Activated T-helper 2 cell treated with anti-CD3 and anti-CD28 coated beads, Interferon-gamma antibody, Interleukin-2, Interleukin-4, amounts not matched to agents 10 μg/mL and 5 μg/mL and 100 μg/mL, durations not matched to agents 14 hours and 24 hours and 36 hours (primary cell): ENCODE measurements at regions of chr6 and their contacts with region 1.

Region 1: DNA sequence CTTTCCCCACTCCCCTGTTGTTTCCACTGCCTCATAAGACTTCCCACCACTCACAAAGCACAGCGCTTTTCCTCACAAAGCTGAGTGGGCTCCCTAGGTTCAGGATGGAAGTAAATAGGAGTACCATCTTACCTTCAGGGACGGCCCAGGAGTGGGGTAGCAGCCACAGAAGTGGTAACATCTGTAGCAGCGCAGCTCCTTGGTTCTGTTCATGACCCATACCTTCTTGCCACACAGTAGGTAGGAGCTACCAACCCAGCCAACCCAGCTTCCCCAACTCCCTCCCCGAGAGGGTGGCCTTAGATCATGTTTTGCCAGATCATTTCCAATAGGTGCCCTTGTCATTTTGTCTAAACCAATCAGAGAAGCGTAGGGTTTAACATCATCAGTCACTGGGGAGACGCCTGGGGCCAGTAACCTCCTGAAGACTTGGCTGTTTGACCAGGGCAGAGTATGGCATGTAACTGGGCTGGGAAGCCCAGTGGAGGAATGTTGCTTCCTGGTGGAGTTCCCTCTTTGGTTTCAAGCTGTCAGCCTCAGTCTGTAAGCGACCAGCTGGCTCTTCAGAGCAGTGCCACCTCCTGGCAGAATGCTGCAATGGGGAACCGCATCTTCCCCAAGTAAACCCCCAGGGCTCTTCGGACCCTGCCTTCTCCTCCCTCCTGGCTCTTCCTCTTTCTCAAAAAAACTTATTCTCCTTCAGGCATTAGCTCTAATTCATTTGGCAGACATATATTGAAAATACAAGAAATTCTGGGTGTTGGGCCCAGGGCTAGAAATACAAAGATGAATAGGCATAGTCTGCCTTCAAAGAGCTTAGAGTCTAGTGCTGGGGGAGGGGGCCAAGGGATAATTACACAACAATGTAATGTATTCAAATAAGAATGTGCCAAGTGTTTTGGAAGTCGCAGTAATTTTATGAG is at the start of gene HLA-DMA:
- DNase-seq: peak; percentile 76
- H3K4me3 Mint-ChIP-seq: peak within 1 kb of the TSS; percentile 80
- H3K27ac Mint-ChIP-seq: peak within 1 kb of the TSS; percentile 79
- H3K4me1 Mint-ChIP-seq: peaks cover 45% of the 10 kb centered on the region
- H3K27me3 Mint-ChIP-seq: no peaks in the 10 kb centered on the region
- total RNA-seq, gene HLA-DMA: 15.9 and 19.0 TPM in 2 replicates

Region 2: GRCh38 chr6:32796848-32797776 is 156.0 kb before region 1 on chr6:
- intact Hi-C with region 1: no loop called
- DNase-seq: peak; percentile 54
- H3K4me3 Mint-ChIP-seq: peak overlapping the region; percentile 22
- H3K27ac Mint-ChIP-seq: no peak overlapping the region
- H3K4me1 Mint-ChIP-seq: peaks cover 17% of the 10 kb centered on the region
- H3K27me3 Mint-ChIP-seq: peaks cover 55% of the 10 kb centered on the region

Region 3: GRCh38 chr6:32940656-32941213 is 12.3 kb before region 1 on chr6 and contains the start of gene HLA-DMB:
- intact Hi-C with region 1: loop called (anchors 1 kb)
- DNase-seq: peak; percentile 48
- H3K4me3 Mint-ChIP-seq: peak within 1 kb of the TSS; percentile 77
- H3K27ac Mint-ChIP-seq: peak within 1 kb of the TSS; percentile 91
- H3K4me1 Mint-ChIP-seq: peaks cover 55% of the 10 kb centered on the region
- H3K27me3 Mint-ChIP-seq: no peaks in the 10 kb centered on the region
- total RNA-seq, gene HLA-DMB: 1.3 and 1.4 TPM in 2 replicates